ENCODE measurements at regions of chr5 and their contacts with region 1.

Region 1: DNA sequence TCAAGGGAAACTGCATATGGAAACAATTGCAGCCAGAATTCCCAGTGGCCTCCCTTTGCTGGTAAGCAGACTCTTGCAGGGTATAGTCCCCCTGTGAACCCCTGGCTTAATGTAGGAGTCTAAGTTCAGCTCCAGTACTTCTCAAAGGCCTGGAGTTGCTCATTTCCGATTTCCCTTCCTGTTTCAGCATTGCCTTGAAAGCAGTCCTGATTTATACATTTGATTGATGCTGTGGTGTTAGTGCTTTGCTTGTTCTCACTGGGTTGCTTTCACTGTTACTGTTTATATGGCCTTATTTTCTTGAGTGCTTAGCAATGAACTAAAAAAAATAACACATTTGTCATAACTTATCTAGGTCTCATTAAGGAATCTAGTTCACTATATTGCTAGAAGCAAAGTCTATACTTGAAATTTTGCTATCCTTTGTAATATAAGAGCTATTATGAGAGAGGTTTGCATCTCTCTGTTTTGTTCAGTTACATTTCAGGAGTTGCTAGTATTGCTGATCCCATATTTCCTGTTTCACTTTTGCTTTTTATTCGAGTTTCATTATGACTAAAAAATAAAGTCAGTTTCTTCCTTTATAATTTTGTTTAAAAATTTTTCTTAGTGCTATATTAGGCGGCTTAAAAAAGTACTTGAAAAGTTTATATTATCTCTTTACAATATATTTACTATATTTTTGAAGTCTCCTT is 122.4 kb upstream of the NMUR2 start:
- DNase-seq: no peak
- H3K4me3 Mint-ChIP-seq: no peak overlapping the region
- H3K27ac Mint-ChIP-seq: no peak overlapping the region
- H3K4me1 Mint-ChIP-seq: peaks cover 12% of the 10 kb centered on the region
- H3K27me3 Mint-ChIP-seq: no peaks in the 10 kb centered on the region

Region 2: DNA sequence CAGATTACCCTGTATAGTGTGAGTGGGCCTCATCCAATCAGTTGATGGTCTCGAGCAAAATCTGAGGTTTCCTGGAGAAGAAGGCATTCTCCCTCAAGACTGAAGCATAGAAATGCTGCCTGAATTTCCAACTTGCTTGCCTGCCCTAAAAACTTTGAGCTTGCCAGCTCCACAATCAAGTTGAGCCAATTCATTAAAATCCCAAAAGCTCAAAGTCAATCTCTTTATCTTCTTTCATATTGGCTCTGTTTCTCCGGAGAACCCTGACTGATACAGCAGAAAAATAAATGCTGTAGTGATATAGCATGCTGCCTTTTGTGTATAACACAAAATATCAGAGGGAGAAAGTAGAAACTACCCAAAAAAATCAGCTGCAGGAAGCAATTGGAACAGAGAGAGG is 50.0 kb before region 1 on chr5:
- CTCF ChIA-PET with region 1: no interaction called
- POLR2A ChIA-PET with region 1: no interaction called
- intact Hi-C with region 1: loop called (anchors 1 kb)
- DNase-seq: no peak
- H3K4me3 Mint-ChIP-seq: no peak overlapping the region
- H3K27ac Mint-ChIP-seq: no peak overlapping the region
- H3K4me1 Mint-ChIP-seq: peaks cover 3% of the 10 kb centered on the region
- H3K27me3 Mint-ChIP-seq: peaks cover 2% of the 10 kb centered on the region

Region 3: GRCh38 chr5:152556784-152557183 is 29.3 kb after region 1 on chr5:
- CTCF ChIA-PET with region 1: no interaction called
- POLR2A ChIA-PET with region 1: no interaction called
- intact Hi-C with region 1: no loop called
- DNase-seq: no peak
- H3K4me3 Mint-ChIP-seq: no peak overlapping the region
- H3K27ac Mint-ChIP-seq: no peak overlapping the region
- H3K4me1 Mint-ChIP-seq: no peaks in the 10 kb centered on the region
- H3K27me3 Mint-ChIP-seq: no peaks in the 10 kb centered on the region